Dendritic cell treated with granulocyte-macrophage colony-stimulating factor and Interleukin-4, amounts not matched to agents 40 ng/mL and 50 ng/mL, for 4 days (primary cell): ENCODE measurements at regions of chrX and their contacts with region 1.

Region 1: DNA sequence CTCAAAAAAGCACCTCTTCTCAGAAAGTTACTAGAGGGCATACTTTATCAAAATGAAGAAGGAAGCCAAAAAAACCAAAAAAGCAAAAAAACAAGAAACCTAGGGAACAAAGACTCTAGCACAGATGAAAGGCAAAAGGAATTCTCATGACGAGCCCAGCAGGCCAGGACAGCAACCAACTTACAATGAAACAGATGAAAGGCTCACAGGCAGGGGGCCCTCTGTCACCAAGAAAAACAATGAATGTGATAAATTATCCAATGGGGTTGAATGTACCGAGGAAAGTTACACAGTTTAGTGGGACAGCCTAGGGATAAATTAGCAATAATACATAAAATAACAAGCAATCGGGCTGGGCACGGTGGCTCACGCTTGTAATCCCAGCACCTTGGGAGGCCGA is 79.0 kb downstream of the GPR82 start:
- H3K4me3 Mint-ChIP-seq: no peak overlapping the region
- H3K27ac Mint-ChIP-seq: no peak overlapping the region
- H3K4me1 Mint-ChIP-seq: peaks cover 4% of the 10 kb centered on the region
- H3K27me3 Mint-ChIP-seq: no peaks in the 10 kb centered on the region

Region 2: GRCh38 chrX:41468647-41469323 is 334.2 kb before region 1 on chrX:
- intact Hi-C with region 1: no loop called
- H3K4me3 Mint-ChIP-seq: no peak overlapping the region
- H3K27ac Mint-ChIP-seq: no peak overlapping the region
- H3K4me1 Mint-ChIP-seq: no peaks in the 10 kb centered on the region
- H3K27me3 Mint-ChIP-seq: no peaks in the 10 kb centered on the region

Region 3: GRCh38 chrX:41923257-41923969 is 120.5 kb after region 1 on chrX and contains the start of gene CASK:
- intact Hi-C with region 1: loop called (anchors 10 kb)
- H3K4me3 Mint-ChIP-seq: peak within 1 kb of the TSS; percentile 87
- H3K27ac Mint-ChIP-seq: peak within 1 kb of the TSS; percentile 73
- H3K4me1 Mint-ChIP-seq: peaks cover 9% of the 10 kb centered on the region
- H3K27me3 Mint-ChIP-seq: peaks cover 10% of the 10 kb centered on the region